ENCODE measurements at regions of chr12 and their contacts with region 1.

Region 1: GRCh38 chr12:89856431-89856830 is 147.8 kb upstream of the ATP2B1 start:
- DNase-seq: peak in 3 of 14 experiments; percentile 32 to 64 (median 58)
- ATAC-seq: peak; percentile 61
- H3K4me3 ChIP-seq: no peak overlapping the region
- H3K4me3 Mint-ChIP-seq: no peak overlapping the region
- H3K27ac ChIP-seq: no peak overlapping the region
- H3K27ac Mint-ChIP-seq: peak overlapping the region; percentile 29
- H3K4me1 ChIP-seq: peaks cover 20% of the 10 kb centered on the region
- H3K4me1 Mint-ChIP-seq: peaks cover 48% of the 10 kb centered on the region
- H3K27me3 ChIP-seq: no peaks in the 10 kb centered on the region
- H3K27me3 Mint-ChIP-seq: no peaks in the 10 kb centered on the region
- CTCF ChIP-seq: no peak

Region 2: GRCh38 chr12:89893972-89894706 is 37.7 kb after region 1 on chr12:
- CTCF ChIA-PET with region 1: no interaction called
- POLR2A ChIA-PET with region 1: no interaction called
- intact Hi-C with region 1: loop called in 1 of 2 experiments (anchors 5 kb)
- DNase-seq: no peak
- ATAC-seq: no peak
- H3K4me3 ChIP-seq: no peak overlapping the region
- H3K4me3 Mint-ChIP-seq: no peak overlapping the region
- H3K27ac ChIP-seq: no peak overlapping the region
- H3K27ac Mint-ChIP-seq: no peak overlapping the region
- H3K4me1 ChIP-seq: no peaks in the 10 kb centered on the region
- H3K4me1 Mint-ChIP-seq: peaks cover 45% of the 10 kb centered on the region
- H3K27me3 ChIP-seq: no peaks in the 10 kb centered on the region
- H3K27me3 Mint-ChIP-seq: no peaks in the 10 kb centered on the region
- CTCF ChIP-seq: no peak

Measured in CD4-positive, alpha-beta T cell (primary cell).